ENCODE measurements at regions of chr3 and their contacts with region 1.

Region 1: GRCh38 chr3:181700168-181701087 is 11.3 kb upstream of the SOX2 start:
- DNase-seq: peak; percentile 72
- CTCF ChIP-seq: peak; percentile 88

Region 2: DNA sequence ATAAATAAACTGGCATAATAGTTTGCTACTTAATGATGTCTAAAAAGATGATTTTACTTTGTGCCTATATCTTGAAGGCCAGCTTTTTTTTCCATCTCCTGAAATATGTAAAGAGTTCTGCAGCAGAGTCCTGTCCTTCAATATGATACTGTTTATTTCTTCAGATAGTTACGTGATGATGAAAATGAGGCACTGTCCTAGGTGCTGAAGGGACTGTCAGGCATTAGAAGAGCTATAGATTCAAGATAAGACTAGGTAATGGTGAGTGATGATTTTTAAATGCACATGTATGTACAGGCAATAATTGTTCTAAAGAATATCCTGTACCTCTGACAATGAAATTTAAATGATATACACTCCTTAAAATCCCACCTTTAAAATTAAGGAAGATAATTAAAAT is 383.9 kb before region 1 on chr3:
- in situ Hi-C with region 1: no loop called
- DNase-seq: no peak
- CTCF ChIP-seq: no peak

Region 3: DNA sequence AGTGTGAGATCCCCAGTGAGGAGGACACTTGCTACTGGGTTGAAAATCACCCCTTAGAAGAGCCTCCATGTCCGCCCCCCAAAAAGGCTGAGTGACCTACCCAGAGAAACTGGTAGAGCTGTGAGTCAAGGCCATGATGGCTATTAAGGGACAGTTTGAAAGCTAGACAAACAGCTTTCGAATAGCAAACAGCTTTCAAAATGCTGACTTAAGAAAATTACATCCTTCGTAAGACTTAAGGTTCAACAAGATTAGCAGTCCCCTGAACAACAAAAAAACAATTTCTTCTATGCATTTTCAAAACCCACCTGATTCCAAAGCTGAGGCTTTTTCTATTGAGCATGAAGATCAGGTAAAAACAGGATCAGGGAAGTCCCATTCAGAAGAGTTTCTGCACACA is 258.4 kb before region 1 on chr3:
- in situ Hi-C with region 1: no loop called
- DNase-seq: no peak
- CTCF ChIP-seq: no peak

Region 4: DNA sequence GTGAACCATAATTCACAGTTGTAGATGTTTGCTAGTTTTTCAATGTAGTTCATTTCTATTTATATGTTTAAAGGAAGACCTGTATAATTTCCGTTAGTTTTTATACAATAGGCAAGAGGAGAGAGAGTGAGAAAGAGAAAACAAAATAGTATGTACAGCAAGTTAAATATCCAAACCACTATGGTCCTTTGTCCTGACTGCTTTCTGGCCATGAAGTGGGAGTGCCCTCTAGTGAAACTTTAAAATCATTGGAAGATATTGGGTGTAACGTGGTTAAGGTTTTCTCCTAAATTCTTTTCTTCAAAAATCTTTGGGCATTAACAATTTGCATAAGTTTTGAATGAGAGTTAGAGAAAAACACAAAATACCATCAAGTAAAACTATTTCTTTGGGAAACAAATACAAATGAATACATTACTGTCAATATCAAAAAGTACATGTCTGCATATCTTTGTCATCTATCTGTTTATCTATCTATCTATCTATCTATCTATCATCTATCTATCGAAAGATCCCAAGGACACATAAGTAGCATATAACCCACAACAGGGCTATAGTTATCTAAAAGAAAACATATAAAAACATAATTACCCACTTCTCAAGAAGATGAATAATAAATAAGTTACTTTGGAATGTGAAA is 558.2 kb after region 1 on chr3:
- in situ Hi-C with region 1: loop called (anchors 25 kb)
- DNase-seq: peak; percentile 32
- CTCF ChIP-seq: peak; percentile 27

Region 5: DNA sequence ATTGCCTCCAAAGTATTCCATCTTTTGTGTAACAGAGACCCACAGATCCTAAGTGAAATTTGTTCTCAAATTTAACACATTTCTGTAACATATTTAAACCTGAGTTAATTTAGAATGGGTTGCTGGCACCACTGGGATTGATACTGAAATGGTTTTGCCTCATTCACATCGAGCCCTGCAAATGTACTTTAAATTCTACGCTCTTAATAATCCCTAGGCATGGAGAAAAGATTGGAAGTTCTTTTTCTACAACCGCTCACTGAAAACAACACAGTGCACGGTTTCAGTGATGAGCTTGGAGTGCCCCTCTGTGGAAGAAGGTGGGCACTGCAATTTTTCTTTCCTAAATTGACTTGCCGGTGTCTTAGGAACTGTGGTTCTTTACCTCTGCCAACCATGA is 983.0 kb after region 1 on chr3:
- in situ Hi-C with region 1: loop called (anchors 10 kb)
- DNase-seq: peak; percentile 73
- CTCF ChIP-seq: peak; percentile 67

Measured in GM13976 (cell line).